ENCODE measurements at regions of chr18 and their contacts with region 1.

Region 1: DNA sequence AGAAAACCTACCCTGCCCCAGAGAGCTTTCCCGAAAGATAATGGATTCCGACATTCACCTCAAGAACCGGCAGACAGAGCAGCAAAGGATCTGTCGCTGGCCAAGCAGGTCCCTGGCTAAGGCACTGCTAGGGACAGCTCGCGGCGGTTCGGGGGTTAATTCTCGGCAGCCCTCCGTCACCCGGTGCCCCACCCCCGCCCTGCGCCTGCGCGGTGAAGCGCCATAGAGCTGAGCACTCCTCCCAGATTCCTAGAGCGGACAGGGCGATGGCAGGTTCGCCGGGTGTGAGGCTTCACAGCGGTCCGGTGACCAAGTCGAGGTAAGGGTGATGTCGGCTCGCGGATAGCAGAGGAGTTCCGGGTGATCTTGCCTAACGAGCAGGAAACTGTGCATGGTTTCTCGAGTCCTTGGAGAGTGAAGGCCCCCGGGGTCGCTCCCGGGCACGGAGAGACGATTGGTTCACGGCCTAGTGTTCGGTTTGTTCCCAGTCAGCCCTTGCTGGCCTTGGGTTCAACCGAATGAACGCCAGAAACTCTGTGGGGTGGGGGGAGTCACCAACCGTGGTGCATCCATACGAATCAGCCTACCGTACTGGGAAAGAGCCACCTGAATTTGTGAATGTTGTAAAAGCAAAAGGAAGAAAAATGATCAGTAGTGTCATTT is at the start of gene ZSCAN30:
- DNase-seq: peak; percentile 96 to 98 (median 96)
- ATAC-seq: peak; percentile 96
- H3K4me3 ChIP-seq: peak within 1 kb of the TSS; percentile 72
- H3K27ac ChIP-seq: peak within 1 kb of the TSS; percentile 88
- H3K4me1 ChIP-seq: peaks cover 0 to 5% of the 10 kb centered on the region in 2 experiments; a peak in 3 of 5 replicates
- H3K27me3 ChIP-seq: no peaks in the 10 kb centered on the region
- CTCF ChIP-seq: no peak
- EP300 ChIP-seq: peak; percentile 52; the same call in 1 of the 2 replicates
- POLR2A ChIP-seq: peak; percentile 95
- RAD21 ChIP-seq: 0 out of 4 replicates have a peak, but pooled peaks have one; percentile 11 to 14
- polyA plus RNA-seq, gene ZSCAN30: 4.6 to 4.9 TPM

Region 2: GRCh38 chr18:34729264-34729663 is 560.9 kb before region 1 on chr18:
- CTCF ChIA-PET with region 1: no interaction called
- POLR2A ChIA-PET with region 1: no interaction called
- in situ Hi-C with region 1: no loop called
- intact Hi-C with region 1: no loop called
- DNase-seq: peak in 1 of 4 experiments; percentile 3
- ATAC-seq: 0 out of 3 replicates have a peak, but pooled peaks have one; percentile 56
- H3K4me3 ChIP-seq: no peak overlapping the region
- H3K27ac ChIP-seq: no peak overlapping the region
- H3K4me1 ChIP-seq: no peaks in the 10 kb centered on the region
- H3K27me3 ChIP-seq: no peaks in the 10 kb centered on the region
- CTCF ChIP-seq: peak in 2 of 3 experiments; percentile 23 to 24; a peak in 1 of 6 replicates
- EP300 ChIP-seq: no peak
- POLR2A ChIP-seq: no peak
- RAD21 ChIP-seq: peak in 1 of 2 experiments; percentile 23; a peak in 1 of 4 replicates

Region 3: DNA sequence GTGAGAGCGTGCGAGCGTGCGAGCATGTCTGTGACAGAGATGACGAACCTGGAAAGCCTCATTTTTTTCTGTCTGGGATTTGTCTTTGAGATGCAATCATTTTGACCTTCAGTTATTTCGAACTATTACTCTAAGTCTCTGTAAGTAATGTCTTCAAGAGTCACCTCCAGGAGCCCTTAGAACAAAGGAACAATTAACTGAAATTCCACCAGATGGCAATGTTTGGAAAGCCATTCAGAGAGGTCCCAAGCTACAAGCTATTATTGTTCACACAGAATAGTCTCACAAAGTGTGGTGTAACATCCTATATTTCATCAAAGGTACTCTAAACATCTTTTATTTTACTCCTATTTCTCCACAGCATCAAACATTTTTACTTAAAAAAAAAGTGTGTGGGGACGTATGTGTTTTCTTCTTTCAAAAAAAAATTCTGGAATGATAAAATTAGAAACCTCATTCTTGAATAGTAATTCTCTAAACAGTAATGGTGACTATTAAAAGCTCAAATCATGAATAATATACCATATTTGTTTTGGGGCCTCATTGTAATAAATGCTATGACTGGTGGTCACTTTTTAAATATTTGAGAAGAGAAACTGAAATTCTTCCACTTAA is 284.1 kb before region 1 on chr18:
- CTCF ChIA-PET with region 1: no interaction called
- POLR2A ChIA-PET with region 1: no interaction called
- in situ Hi-C with region 1: no loop called
- intact Hi-C with region 1: loop called (anchors 10 kb)
- DNase-seq: peak; percentile 20 to 80 (median 46)
- ATAC-seq: peak; percentile 98
- H3K4me3 ChIP-seq: no peak overlapping the region
- H3K27ac ChIP-seq: no peak overlapping the region
- H3K4me1 ChIP-seq: no peaks in the 10 kb centered on the region; a peak in 1 of 5 replicates
- H3K27me3 ChIP-seq: peaks cover 0 to 6% of the 10 kb centered on the region in 2 experiments; a peak in 1 of 5 replicates
- CTCF ChIP-seq: peak; percentile 62 to 85 (median 69); a peak in 5 of 6 replicates
- EP300 ChIP-seq: no peak
- POLR2A ChIP-seq: no peak
- RAD21 ChIP-seq: peak; percentile 94 to 97

Region 4: GRCh38 chr18:35203067-35203466 is 87.1 kb before region 1 on chr18:
- CTCF ChIA-PET with region 1: no interaction called
- POLR2A ChIA-PET with region 1: no interaction called
- in situ Hi-C with region 1: no loop called
- intact Hi-C with region 1: no loop called
- DNase-seq: no peak
- ATAC-seq: no peak
- H3K4me3 ChIP-seq: no peak overlapping the region
- H3K27ac ChIP-seq: no peak overlapping the region
- H3K4me1 ChIP-seq: no peaks in the 10 kb centered on the region
- H3K27me3 ChIP-seq: no peaks in the 10 kb centered on the region
- CTCF ChIP-seq: no peak
- EP300 ChIP-seq: no peak
- POLR2A ChIP-seq: no peak
- RAD21 ChIP-seq: no peak

Region 5: DNA sequence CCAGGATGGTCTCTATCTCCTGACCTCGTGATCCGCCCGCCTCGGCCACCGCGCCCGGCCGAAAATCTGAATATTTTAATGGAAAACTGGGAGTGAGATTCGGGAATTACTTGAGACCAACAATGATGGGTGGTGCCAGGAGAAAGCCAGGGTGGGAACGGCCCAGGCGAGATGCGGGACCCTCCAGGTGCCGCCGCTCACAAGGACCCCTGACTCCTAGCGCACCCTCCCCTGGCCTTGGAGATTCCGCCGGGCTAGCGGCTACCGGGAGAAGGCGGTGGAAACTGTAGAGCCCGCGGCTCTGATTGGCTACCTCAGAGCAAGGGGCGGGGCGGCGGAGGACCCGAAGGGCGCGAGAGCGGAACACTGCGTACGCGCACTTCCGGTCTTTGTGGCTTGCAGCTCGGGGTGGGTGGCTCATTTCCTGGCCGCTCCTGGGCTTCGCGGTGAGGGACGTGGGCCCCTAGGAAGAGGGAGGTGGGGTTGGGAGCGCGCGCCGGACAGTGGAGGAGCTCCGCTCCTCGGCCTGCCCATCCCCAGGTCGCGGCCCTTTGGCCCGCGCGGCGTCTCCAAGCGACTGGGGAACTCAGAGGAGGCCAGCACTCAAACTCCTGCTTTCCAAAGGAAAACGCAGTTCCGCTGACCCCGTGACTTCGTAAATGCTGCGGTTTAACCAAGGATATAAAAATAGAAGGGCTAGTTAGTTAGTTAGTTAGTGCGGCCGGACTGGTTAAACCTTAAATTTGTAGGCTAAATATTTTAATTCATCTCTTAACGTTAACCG is 49.3 kb before region 1 on chr18 and contains the start of gene ZNF397:
- CTCF ChIA-PET with region 1: no interaction called
- POLR2A ChIA-PET with region 1: interaction called, 4 read pairs
- in situ Hi-C with region 1: loop called (anchors 5 kb)
- intact Hi-C with region 1: loop called (anchors 2 kb)
- DNase-seq: peak; percentile 99
- ATAC-seq: peak; percentile 98
- H3K4me3 ChIP-seq: peak within 1 kb of the TSS; percentile 61
- H3K27ac ChIP-seq: peak within 1 kb of the TSS; percentile 87
- H3K4me1 ChIP-seq: peaks cover 3 to 11% of the 10 kb centered on the region in 2 experiments
- H3K27me3 ChIP-seq: no peaks in the 10 kb centered on the region
- CTCF ChIP-seq: 0 out of 6 replicates have a peak, but pooled peaks of 1 of the 3 experiments have one; percentile 7
- EP300 ChIP-seq: peak; percentile 11; the same call in 1 of the 2 replicates
- POLR2A ChIP-seq: peak; percentile 97
- RAD21 ChIP-seq: peak; percentile 16 to 21; a peak in 2 of 4 replicates
- polyA plus RNA-seq, gene ZNF397: 6.4 to 8.7 TPM

Region 6: GRCh38 chr18:35277633-35278032 is 12.6 kb before region 1 on chr18:
- CTCF ChIA-PET with region 1: no interaction called
- POLR2A ChIA-PET with region 1: interaction called, 11 read pairs
- in situ Hi-C with region 1: no loop called
- intact Hi-C with region 1: no loop called
- DNase-seq: no peak
- ATAC-seq: no peak
- H3K4me3 ChIP-seq: no peak overlapping the region
- H3K27ac ChIP-seq: no peak overlapping the region
- H3K4me1 ChIP-seq: no peaks in the 10 kb centered on the region
- H3K27me3 ChIP-seq: no peaks in the 10 kb centered on the region
- CTCF ChIP-seq: no peak
- EP300 ChIP-seq: no peak
- POLR2A ChIP-seq: no peak
- RAD21 ChIP-seq: no peak

Region 7: DNA sequence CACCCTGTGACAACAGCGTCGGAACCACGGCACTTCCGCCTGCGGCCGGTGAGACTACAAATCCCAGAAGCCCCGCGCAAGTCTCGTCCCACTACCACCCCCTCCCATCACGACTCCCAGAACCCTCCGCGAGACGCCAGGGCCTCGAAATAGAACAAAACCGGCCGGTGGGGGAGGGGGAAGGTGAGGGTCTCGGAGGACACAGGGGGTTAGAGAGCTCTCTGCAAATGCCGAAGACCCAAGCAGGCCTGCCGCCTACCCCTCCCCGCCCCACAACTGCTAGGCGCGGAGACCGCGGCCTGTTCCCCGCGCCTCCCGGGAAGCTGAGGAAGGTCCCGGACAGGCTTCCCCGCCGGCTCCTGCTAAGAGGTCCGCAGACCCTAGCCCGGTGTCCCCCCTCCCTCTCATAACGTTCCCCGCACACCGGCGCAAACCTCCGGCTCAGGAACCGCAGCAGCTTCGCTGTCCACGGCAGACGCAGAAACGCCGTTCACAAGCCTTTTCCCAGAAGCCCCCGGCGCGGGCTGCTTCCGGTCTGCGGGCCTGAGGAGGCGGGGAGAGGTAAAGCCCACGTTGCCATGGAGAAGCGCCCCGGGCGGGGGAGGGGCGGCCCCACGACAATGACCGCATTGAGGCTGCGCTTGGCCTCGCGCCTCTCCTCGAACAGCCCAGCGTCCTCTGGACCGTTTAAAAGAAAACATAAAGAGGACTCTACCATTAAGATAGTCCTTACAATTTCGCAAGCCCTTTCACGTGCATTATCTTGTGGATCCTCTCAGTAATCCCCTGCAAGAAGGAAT is 53.9 kb after region 1 on chr18 and contains the start of gene ZNF24:
- CTCF ChIA-PET with region 1: no interaction called
- POLR2A ChIA-PET with region 1: interaction called, 4 read pairs
- in situ Hi-C with region 1: no loop called
- intact Hi-C with region 1: loop called (anchors 5 kb)
- DNase-seq: peak; percentile 98
- ATAC-seq: peak; percentile 97
- H3K4me3 ChIP-seq: peak within 1 kb of the TSS; percentile 91
- H3K27ac ChIP-seq: peak within 1 kb of the TSS; percentile 99
- H3K4me1 ChIP-seq: peaks cover 8 to 10% of the 10 kb centered on the region in 2 experiments; a peak in 4 of 5 replicates
- H3K27me3 ChIP-seq: no peaks in the 10 kb centered on the region
- CTCF ChIP-seq: no peak
- EP300 ChIP-seq: peak; percentile 4; the same call in 1 of the 2 replicates
- POLR2A ChIP-seq: peak; percentile 98
- RAD21 ChIP-seq: no peak; a peak in 1 of 4 replicates
- polyA plus RNA-seq, gene ZNF24: 51.6 to 72.2 TPM

Measured in K562 (cell line).